CD8-positive, alpha-beta T cell (primary cell): ENCODE measurements at regions of chr11 and their contacts with region 1.

Region 1: DNA sequence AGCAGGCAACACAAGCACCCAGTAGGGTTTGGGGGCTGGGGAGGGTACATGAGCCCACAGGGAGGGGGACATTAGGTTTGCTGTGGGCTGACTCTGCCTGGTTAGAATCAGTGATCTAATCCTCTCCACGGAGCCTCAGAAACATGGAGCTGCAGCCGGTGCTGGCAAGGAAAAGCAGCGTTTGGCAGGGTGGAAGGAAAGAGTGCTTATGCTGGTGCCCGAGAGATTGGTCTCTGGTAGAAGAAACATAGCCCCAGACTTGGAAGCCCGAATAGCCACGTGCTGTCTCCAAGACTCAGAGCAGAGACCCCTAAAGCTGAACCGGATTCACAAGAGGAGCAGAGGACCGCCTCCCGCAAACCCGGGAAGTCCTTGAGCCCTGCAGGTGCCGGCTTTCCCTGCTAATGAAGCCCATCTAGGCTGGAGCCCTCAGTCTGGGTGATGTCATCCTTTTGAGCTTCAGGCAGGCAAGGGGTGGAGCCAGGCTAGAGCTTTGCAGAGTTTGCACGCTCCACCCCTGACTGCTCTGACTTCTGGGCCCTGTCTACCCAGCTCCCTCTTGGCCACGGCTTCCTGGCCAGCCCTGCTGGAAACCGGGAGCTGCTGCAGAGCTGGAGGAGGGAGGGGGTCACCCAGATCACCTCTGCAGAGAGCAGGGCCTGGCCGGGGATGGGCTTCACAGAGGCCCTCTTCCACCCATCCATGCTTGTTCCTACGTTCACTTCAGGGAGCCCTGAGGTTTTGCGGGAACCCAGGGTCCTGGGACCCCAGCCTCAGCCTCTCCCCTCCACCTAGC is 35.0 kb upstream of the JAM3 start:
- DNase-seq: peak; percentile 31 to 86 (median 74)
- ATAC-seq: peak; percentile 84
- H3K4me3 ChIP-seq: peak overlapping the region; percentile 26 to 55
- H3K4me3 Mint-ChIP-seq: peak overlapping the region; percentile 76
- H3K27ac ChIP-seq: peak overlapping the region; percentile 57 to 65
- H3K27ac Mint-ChIP-seq: peak overlapping the region; percentile 92
- H3K4me1 ChIP-seq: peaks cover 72% of the 10 kb centered on the region
- H3K4me1 Mint-ChIP-seq: peaks cover 75% of the 10 kb centered on the region
- H3K27me3 ChIP-seq: no peaks in the 10 kb centered on the region
- H3K27me3 Mint-ChIP-seq: no peaks in the 10 kb centered on the region
- CTCF ChIP-seq: no peak

Region 2: GRCh38 chr11:133947321-133947756 is 86.6 kb before region 1 on chr11:
- CTCF ChIA-PET with region 1: interaction called, 5 read pairs
- POLR2A ChIA-PET with region 1: interaction called, 10 read pairs
- intact Hi-C with region 1: loop called in 1 of 2 experiments (anchors 2 kb)
- DNase-seq: peak; percentile 41 to 81 (median 68)
- ATAC-seq: peak; percentile 32
- H3K4me3 ChIP-seq: peak overlapping the region in 1 of 2 experiments; percentile 7
- H3K4me3 Mint-ChIP-seq: peak overlapping the region; percentile 60
- H3K27ac ChIP-seq: no peak overlapping the region
- H3K27ac Mint-ChIP-seq: peak overlapping the region; percentile 79
- H3K4me1 ChIP-seq: peaks cover 58% of the 10 kb centered on the region
- H3K4me1 Mint-ChIP-seq: peaks cover 51% of the 10 kb centered on the region
- H3K27me3 ChIP-seq: peaks cover 0 to 10% of the 10 kb centered on the region in 2 experiments
- H3K27me3 Mint-ChIP-seq: no peaks in the 10 kb centered on the region
- CTCF ChIP-seq: peak; percentile 24

Region 3: DNA sequence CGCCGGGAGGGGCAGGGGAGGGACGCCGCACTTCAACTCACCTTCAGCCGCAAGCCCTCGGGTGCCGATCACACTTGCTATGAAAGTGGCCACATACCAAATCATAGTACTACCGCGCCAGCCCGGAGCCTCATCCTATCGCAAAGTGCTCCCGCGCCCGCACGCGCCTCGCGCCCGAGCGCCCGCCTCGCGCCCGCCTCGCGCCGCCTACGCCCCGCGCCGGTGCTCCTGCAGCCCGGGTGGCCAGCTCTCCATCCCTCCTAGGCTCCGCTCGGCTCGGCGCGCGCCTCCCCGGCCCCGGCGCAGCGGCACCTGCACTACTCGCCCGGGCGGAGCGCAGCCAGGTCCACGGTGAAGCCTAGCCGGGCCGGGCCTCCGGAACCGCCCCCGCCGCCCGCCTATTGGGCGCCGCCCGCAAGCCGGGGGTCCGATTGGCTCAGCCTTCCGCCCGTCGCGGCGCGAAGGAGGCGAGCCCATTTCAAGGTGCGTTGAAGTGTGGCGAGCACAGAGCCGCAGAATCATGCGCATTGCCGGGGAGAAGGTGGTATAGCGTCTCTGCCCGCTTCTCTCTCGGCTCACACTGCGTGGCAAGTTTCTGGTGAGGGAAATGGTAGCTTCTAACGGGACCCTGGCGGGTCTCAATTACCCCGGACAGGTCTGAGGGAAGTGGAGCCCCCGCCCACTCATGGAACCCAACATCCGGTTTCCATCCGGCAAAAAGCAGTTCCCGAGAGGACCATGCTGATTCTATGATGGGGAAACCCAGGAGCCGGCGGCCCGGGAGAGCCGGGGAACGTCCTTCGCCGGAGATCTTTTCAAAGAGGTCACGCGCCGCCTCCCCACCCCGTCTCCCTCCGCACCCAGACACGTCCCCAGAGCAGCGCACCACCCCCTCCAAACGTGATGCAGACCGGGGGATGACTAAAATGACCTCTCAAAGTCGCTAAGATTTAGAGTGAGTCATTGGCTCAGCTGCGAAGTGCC is 77.0 kb before region 1 on chr11 and contains the start of gene IGSF9B:
- CTCF ChIA-PET with region 1: no interaction called
- POLR2A ChIA-PET with region 1: interaction called, 7 read pairs
- intact Hi-C with region 1: loop called in 1 of 2 experiments (anchors 5 kb)
- DNase-seq: peak; percentile 82 to 95 (median 90)
- ATAC-seq: peak; percentile 93
- H3K4me3 ChIP-seq: peak within 1 kb of the TSS; percentile 67 to 81
- H3K4me3 Mint-ChIP-seq: peak within 1 kb of the TSS; percentile 90
- H3K27ac ChIP-seq: peak within 1 kb of the TSS; percentile 62 to 64
- H3K27ac Mint-ChIP-seq: peak within 1 kb of the TSS; percentile 86
- H3K4me1 ChIP-seq: peaks cover 29% of the 10 kb centered on the region
- H3K4me1 Mint-ChIP-seq: peaks cover 40% of the 10 kb centered on the region
- H3K27me3 ChIP-seq: peaks cover 0 to 7% of the 10 kb centered on the region in 2 experiments
- H3K27me3 Mint-ChIP-seq: peaks cover 8% of the 10 kb centered on the region
- CTCF ChIP-seq: no peak
- total RNA-seq, gene IGSF9B: 10.1 to 11.6 TPM

Region 4: GRCh38 chr11:134068829-134069425 is 35.0 kb after region 1 on chr11 and contains the start of gene JAM3:
- CTCF ChIA-PET with region 1: no interaction called
- POLR2A ChIA-PET with region 1: interaction called, 4 read pairs
- intact Hi-C with region 1: loop called in 1 of 2 experiments (anchors 1 kb)
- DNase-seq: peak; percentile 95 to 99 (median 98)
- ATAC-seq: peak; percentile 91
- H3K4me3 ChIP-seq: peak within 1 kb of the TSS; percentile 52 to 58
- H3K4me3 Mint-ChIP-seq: peak within 1 kb of the TSS; percentile 94
- H3K27ac ChIP-seq: peak within 1 kb of the TSS in 1 of 2 experiments; percentile 50
- H3K27ac Mint-ChIP-seq: peak within 1 kb of the TSS; percentile 87
- H3K4me1 ChIP-seq: peaks cover 6% of the 10 kb centered on the region
- H3K4me1 Mint-ChIP-seq: peaks cover 17% of the 10 kb centered on the region
- H3K27me3 ChIP-seq: no peaks in the 10 kb centered on the region
- H3K27me3 Mint-ChIP-seq: peaks cover 1% of the 10 kb centered on the region
- CTCF ChIP-seq: no peak
- total RNA-seq, gene JAM3: 12.1 to 15.2 TPM